ENCODE measurements at regions of chr17 and their contacts with region 1.

Region 1: GRCh38 chr17:17823433-17824118 is 13.2 kb downstream of the SREBF1 start:
- DNase-seq: peak; percentile 86 to 93 (median 88)
- ATAC-seq: peak; percentile 83 to 90 (median 90)
- H3K4me3 ChIP-seq: peak overlapping the region in 11 of 12 donors; percentile 22 to 69 (median 57)
- H3K27ac ChIP-seq: peak overlapping the region; percentile 43 to 88 (median 83)
- H3K4me1 ChIP-seq: peaks cover 26 to 83% (median 42%) of the 10 kb centered on the region in 12 donors
- H3K27me3 ChIP-seq: no peaks in the 10 kb centered on the region
- CTCF ChIP-seq: no peak
- POLR2A ChIP-seq: no peak

Region 2: DNA sequence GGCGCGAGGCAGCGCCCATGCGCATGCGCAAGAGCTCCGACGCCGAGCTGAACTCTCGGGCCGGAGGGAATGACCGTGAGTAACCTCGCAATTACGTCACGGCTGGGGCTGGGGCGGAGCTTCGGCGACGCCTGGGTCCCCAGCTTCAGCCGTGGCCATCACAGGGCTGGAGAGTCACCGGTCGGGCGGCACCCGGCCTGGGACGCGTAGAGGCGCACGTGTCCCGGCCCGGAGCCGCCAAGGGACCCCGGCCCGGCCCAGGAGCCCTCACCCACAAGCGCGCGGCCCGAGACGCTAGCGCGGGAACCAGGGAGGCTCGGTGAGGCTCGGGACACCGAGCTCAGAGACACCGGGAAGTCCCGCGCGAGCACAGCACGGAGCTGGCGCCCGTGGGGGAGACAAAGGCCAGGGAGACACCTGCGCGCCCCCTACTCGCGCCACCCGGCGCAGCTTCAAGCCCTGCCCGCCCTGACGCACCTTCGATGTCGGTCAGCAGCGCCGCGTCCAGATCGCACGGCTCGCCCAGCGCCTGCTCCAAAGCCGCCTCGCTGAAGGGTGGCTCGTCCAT is 12.8 kb after region 1 on chr17:
- intact Hi-C with region 1: loop called in 1 of 10 experiments (anchors 2 kb)
- DNase-seq: peak; percentile 97 to 99 (median 98)
- ATAC-seq: peak; percentile 81 to 86 (median 84)
- H3K4me3 ChIP-seq: peak overlapping the region; percentile 51 to 98 (median 76)
- H3K27ac ChIP-seq: peak overlapping the region; percentile 96 to 99 (median 98)
- H3K4me1 ChIP-seq: peaks cover 29 to 82% (median 67%) of the 10 kb centered on the region in 12 donors
- H3K27me3 ChIP-seq: no peaks in the 10 kb centered on the region
- CTCF ChIP-seq: no peak
- POLR2A ChIP-seq: peak; percentile 95 to 99

Measured in heart left ventricle (tissue), 16 donors.